T-cell (primary cell): ENCODE measurements at regions of chr2 and their contacts with region 1.

Region 1: DNA sequence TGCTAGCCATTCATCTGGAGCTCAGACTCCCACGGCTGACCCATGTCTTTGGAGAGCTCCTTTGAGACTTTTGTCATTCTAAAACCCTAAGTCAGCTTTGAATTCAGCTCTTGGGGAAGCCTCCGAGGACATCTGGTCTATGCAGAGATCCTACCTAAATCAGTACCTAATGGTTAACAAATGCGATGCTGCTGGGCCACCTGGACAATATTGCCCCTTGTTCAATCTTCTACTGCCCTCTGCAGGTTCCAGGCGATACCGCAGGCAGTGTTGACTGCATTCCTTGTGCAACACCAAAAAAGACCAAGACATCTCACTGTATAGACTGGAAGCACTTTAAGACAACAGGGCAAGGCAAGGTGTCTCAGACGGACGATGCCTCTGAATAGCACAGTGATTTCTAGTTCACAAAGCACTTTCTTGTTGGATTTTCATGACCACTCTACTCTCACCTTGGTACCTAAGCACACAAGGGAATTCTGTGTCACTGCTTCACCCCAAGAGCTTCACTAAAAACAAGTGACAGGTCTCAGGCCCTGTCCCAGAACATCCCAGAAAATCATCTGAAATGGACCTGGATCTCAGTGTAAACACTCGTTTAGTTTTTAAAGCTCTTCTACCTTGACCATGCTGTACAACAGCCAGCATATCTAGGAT is 80.9 kb downstream of the XDH start:
- DNase-seq: peak; percentile 22 to 80 (median 65)
- ATAC-seq: peak; percentile 66 to 85 (median 75)
- H3K4me3 ChIP-seq: no peak overlapping the region
- H3K4me3 Mint-ChIP-seq: no peak overlapping the region
- H3K27ac ChIP-seq: no peak overlapping the region
- H3K27ac Mint-ChIP-seq: no peak overlapping the region
- H3K4me1 ChIP-seq: no peaks in the 10 kb centered on the region
- H3K4me1 Mint-ChIP-seq: no peaks in the 10 kb centered on the region
- H3K27me3 ChIP-seq: peaks cover 0 to 4% of the 10 kb centered on the region in 2 experiments
- H3K27me3 Mint-ChIP-seq: peaks cover 3 to 5% of the 10 kb centered on the region in 2 donors

Region 2: DNA sequence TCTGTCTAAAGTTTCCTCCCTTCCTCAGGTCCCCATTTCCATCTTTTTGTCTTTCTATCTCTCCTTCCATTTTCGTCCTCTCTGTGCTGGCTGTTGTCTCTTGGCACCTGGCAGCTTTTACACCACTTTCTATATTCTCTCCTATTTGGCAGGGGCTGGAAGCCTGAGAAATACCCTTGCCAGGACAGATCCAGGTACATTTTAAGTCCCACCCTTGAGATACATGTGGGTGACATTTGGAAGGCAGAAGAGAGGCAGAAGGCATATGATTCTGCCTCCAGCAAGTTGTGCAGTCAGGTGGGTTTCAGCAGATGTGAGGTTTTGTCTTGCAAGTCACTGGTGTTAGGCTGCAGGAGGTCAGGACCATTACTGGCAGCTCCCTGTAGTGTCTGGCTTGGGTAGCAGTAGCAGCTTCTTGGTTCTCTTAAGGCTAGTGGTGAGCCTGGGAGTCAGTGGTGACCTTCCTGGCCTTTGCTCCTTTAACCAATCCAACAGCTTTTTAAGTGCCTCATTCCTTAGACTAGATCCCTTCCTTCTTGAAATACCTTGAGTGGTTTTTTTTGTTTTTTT is 616.5 kb before region 1 on chr2:
- CTCF ChIA-PET with region 1: interaction called, 27 to 34 read pairs
- POLR2A ChIA-PET with region 1: no interaction called
- DNase-seq: no peak
- ATAC-seq: no peak
- H3K4me3 ChIP-seq: no peak overlapping the region
- H3K4me3 Mint-ChIP-seq: no peak overlapping the region
- H3K27ac ChIP-seq: no peak overlapping the region
- H3K27ac Mint-ChIP-seq: no peak overlapping the region
- H3K4me1 ChIP-seq: peaks cover 0 to 8% of the 10 kb centered on the region in 2 experiments
- H3K4me1 Mint-ChIP-seq: peaks cover 0 to 5% (median 2%) of the 10 kb centered on the region in 3 donors
- H3K27me3 ChIP-seq: peaks cover 0 to 11% of the 10 kb centered on the region in 2 experiments
- H3K27me3 Mint-ChIP-seq: peaks cover 0 to 4% of the 10 kb centered on the region in 2 donors